Naive thymus-derived CD4-positive, alpha-beta T cell (primary cell): ENCODE measurements at regions of chr5 and their contacts with region 1.

Region 1: GRCh38 chr5:138464008-138464387 is 1.3 kb upstream of the EGR1 start:
- DNase-seq: peak; percentile 90 to 97 (median 94)
- ATAC-seq: peak; percentile 71
- H3K4me3 ChIP-seq: peak overlapping the region; percentile 95
- H3K4me3 Mint-ChIP-seq: peak overlapping the region; percentile 78 to 93 (median 89)
- H3K27ac ChIP-seq: peak overlapping the region; percentile 91
- H3K27ac Mint-ChIP-seq: peak overlapping the region; percentile 76 to 97 (median 91)
- H3K4me1 ChIP-seq: peaks cover 31 to 43% of the 10 kb centered on the region in 2 donors
- H3K4me1 Mint-ChIP-seq: peaks cover 36 to 54% (median 50%) of the 10 kb centered on the region in 7 donors
- H3K27me3 ChIP-seq: no peaks in the 10 kb centered on the region
- H3K27me3 Mint-ChIP-seq: peaks cover 0 to 20% (median 0%) of the 10 kb centered on the region in 5 donors

Region 2: GRCh38 chr5:137754126-137754960 is 709.7 kb before region 1 on chr5 and contains the start of gene HNRNPA0:
- CTCF ChIA-PET with region 1: no interaction called
- POLR2A ChIA-PET with region 1: no interaction called
- intact Hi-C with region 1: loop called (anchors 1 to 2 kb)
- DNase-seq: peak; percentile 94 to 99 (median 98)
- ATAC-seq: peak; percentile 90
- H3K4me3 ChIP-seq: peak within 1 kb of the TSS; percentile 98
- H3K4me3 Mint-ChIP-seq: peak within 1 kb of the TSS; percentile 85 to 100 (median 98)
- H3K27ac ChIP-seq: peak within 1 kb of the TSS; percentile 98
- H3K27ac Mint-ChIP-seq: peak within 1 kb of the TSS; percentile 99 to 100 (median 100)
- H3K4me1 ChIP-seq: peaks cover 17 to 20% of the 10 kb centered on the region in 2 donors
- H3K4me1 Mint-ChIP-seq: peaks cover 21 to 43% (median 31%) of the 10 kb centered on the region in 7 donors
- H3K27me3 ChIP-seq: no peaks in the 10 kb centered on the region
- H3K27me3 Mint-ChIP-seq: peaks cover 0 to 2% (median 0%) of the 10 kb centered on the region in 5 donors
- total RNA-seq, gene HNRNPA0: 30.0 to 40.2 (median 30.7) TPM

Region 3: GRCh38 chr5:138331449-138332368 is 132.3 kb before region 1 on chr5 and contains the start of gene CDC25C:
- CTCF ChIA-PET with region 1: no interaction called
- POLR2A ChIA-PET with region 1: no interaction called
- intact Hi-C with region 1: loop called (anchors 1 kb)
- DNase-seq: peak; percentile 87 to 98 (median 96)
- ATAC-seq: peak; percentile 100
- H3K4me3 ChIP-seq: peak within 1 kb of the TSS; percentile 85
- H3K4me3 Mint-ChIP-seq: peak within 1 kb of the TSS; percentile 83 to 95 (median 86)
- H3K27ac ChIP-seq: peak within 1 kb of the TSS; percentile 49
- H3K27ac Mint-ChIP-seq: peak within 1 kb of the TSS; percentile 48 to 92 (median 68)
- H3K4me1 ChIP-seq: peaks cover 1 to 7% of the 10 kb centered on the region in 2 donors
- H3K4me1 Mint-ChIP-seq: peaks cover 7 to 35% (median 14%) of the 10 kb centered on the region in 7 donors
- H3K27me3 ChIP-seq: no peaks in the 10 kb centered on the region
- H3K27me3 Mint-ChIP-seq: no peaks in the 10 kb centered on the region
- total RNA-seq, gene CDC25C: 9.8 TPM in 1 of 5 experiments, not detected in the others

Region 4: GRCh38 chr5:138382347-138382746 is 81.7 kb before region 1 on chr5:
- CTCF ChIA-PET with region 1: no interaction called
- POLR2A ChIA-PET with region 1: no interaction called
- intact Hi-C with region 1: no loop called
- DNase-seq: no peak
- ATAC-seq: no peak
- H3K4me3 ChIP-seq: no peak overlapping the region
- H3K4me3 Mint-ChIP-seq: no peak overlapping the region
- H3K27ac ChIP-seq: no peak overlapping the region
- H3K27ac Mint-ChIP-seq: no peak overlapping the region
- H3K4me1 ChIP-seq: no peaks in the 10 kb centered on the region
- H3K4me1 Mint-ChIP-seq: no peaks in the 10 kb centered on the region
- H3K27me3 ChIP-seq: no peaks in the 10 kb centered on the region
- H3K27me3 Mint-ChIP-seq: no peaks in the 10 kb centered on the region

Region 5: DNA sequence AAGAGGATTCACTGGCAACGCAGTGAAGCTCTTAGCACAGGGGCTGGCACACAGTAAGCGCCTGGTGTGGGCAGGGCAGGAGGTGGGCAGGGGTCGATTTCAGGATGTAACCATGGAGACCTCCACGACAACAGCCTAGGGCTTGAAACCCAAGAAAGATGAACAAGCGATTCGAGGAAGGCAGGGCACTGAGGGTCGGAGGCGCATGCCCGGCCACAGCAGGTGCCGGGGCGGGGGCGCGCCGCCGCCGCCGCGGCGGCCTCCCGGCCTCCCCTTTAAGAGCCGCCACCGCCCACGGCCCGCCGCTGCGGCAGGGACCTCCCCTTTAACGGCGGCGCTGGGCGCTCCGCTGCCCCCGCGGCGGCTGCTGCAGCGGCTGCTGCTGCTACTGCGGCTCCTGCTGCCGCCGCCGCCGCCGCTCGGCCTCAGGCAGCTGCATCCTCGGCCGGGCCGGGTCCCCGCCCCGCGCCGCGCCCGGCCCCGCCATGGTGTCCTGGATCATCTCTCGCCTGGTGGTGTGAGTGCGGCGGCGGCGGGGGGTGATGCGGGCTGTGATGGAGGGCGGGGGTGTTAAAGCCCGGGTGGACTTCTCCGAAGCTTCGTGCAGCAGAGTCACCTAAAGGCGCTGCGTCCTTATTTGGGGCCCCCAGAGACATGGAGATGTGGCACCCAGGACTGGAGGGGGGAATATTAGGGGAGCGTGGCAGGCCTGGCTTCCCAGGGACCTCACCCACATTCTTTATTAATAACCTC is 25.1 kb before region 1 on chr5 and contains the start of gene REEP2:
- CTCF ChIA-PET with region 1: interaction called, 3 read pairs
- POLR2A ChIA-PET with region 1: no interaction called
- intact Hi-C with region 1: loop called in 1 of 2 experiments (anchors 1 kb)
- DNase-seq: peak in 8 of 9 donors; percentile 28 to 84 (median 43)
- ATAC-seq: peak; percentile 89
- H3K4me3 ChIP-seq: peak within 1 kb of the TSS; percentile 60
- H3K4me3 Mint-ChIP-seq: peak within 1 kb of the TSS; percentile 57 to 89 (median 83)
- H3K27ac ChIP-seq: no peak within 1 kb of the TSS
- H3K27ac Mint-ChIP-seq: peak within 1 kb of the TSS in 6 of 9 donors; percentile 17 to 86 (median 65)
- H3K4me1 ChIP-seq: peaks cover 3 to 11% of the 10 kb centered on the region in 2 donors
- H3K4me1 Mint-ChIP-seq: peaks cover 12 to 24% (median 14%) of the 10 kb centered on the region in 7 donors
- H3K27me3 ChIP-seq: no peaks in the 10 kb centered on the region
- H3K27me3 Mint-ChIP-seq: peaks cover 0 to 11% (median 5%) of the 10 kb centered on the region in 5 donors
- total RNA-seq, gene REEP2: 0.94 to 1.2 TPM in 2 of 5 experiments, not detected in the others

Region 6: GRCh38 chr5:138503487-138504270 is 39.7 kb after region 1 on chr5:
- CTCF ChIA-PET with region 1: interaction called, 24 read pairs
- POLR2A ChIA-PET with region 1: interaction called, 8 read pairs
- intact Hi-C with region 1: loop called (anchors 1 kb)
- DNase-seq: peak in 7 of 9 donors; percentile 30 to 60 (median 49)
- ATAC-seq: peak; percentile 82
- H3K4me3 ChIP-seq: no peak overlapping the region
- H3K4me3 Mint-ChIP-seq: no peak overlapping the region
- H3K27ac ChIP-seq: no peak overlapping the region
- H3K27ac Mint-ChIP-seq: peak overlapping the region in 3 of 9 donors; percentile 9 to 47 (median 32)
- H3K4me1 ChIP-seq: no peaks in the 10 kb centered on the region
- H3K4me1 Mint-ChIP-seq: peaks cover 0 to 5% (median 3%) of the 10 kb centered on the region in 7 donors
- H3K27me3 ChIP-seq: no peaks in the 10 kb centered on the region
- H3K27me3 Mint-ChIP-seq: no peaks in the 10 kb centered on the region

Region 7: GRCh38 chr5:138520971-138521370 is 57.0 kb after region 1 on chr5:
- CTCF ChIA-PET with region 1: no interaction called
- POLR2A ChIA-PET with region 1: no interaction called
- intact Hi-C with region 1: no loop called
- DNase-seq: no peak
- ATAC-seq: no peak
- H3K4me3 ChIP-seq: no peak overlapping the region
- H3K4me3 Mint-ChIP-seq: no peak overlapping the region
- H3K27ac ChIP-seq: no peak overlapping the region
- H3K27ac Mint-ChIP-seq: peak overlapping the region in 7 of 9 donors; percentile 0 to 59 (median 15)
- H3K4me1 ChIP-seq: no peaks in the 10 kb centered on the region
- H3K4me1 Mint-ChIP-seq: peaks cover 12 to 31% (median 22%) of the 10 kb centered on the region in 7 donors
- H3K27me3 ChIP-seq: no peaks in the 10 kb centered on the region
- H3K27me3 Mint-ChIP-seq: no peaks in the 10 kb centered on the region

Region 8: GRCh38 chr5:139392678-139393496 is 928.9 kb after region 1 on chr5:
- CTCF ChIA-PET with region 1: no interaction called
- POLR2A ChIA-PET with region 1: no interaction called
- intact Hi-C with region 1: loop called in 1 of 2 experiments (anchors 10 kb)
- DNase-seq: peak; percentile 39 to 87 (median 60)
- ATAC-seq: peak; percentile 82
- H3K4me3 ChIP-seq: peak overlapping the region; percentile 76
- H3K4me3 Mint-ChIP-seq: peak overlapping the region; percentile 87 to 97 (median 90)
- H3K27ac ChIP-seq: peak overlapping the region; percentile 17
- H3K27ac Mint-ChIP-seq: peak overlapping the region in 6 of 9 donors; percentile 7 to 97 (median 59)
- H3K4me1 ChIP-seq: peaks cover 5 to 34% of the 10 kb centered on the region in 2 donors
- H3K4me1 Mint-ChIP-seq: peaks cover 12 to 61% (median 23%) of the 10 kb centered on the region in 7 donors
- H3K27me3 ChIP-seq: no peaks in the 10 kb centered on the region
- H3K27me3 Mint-ChIP-seq: no peaks in the 10 kb centered on the region